Left cardiac atrium (tissue), 4 donors: ENCODE measurements at regions of chr19 and their contacts with region 1.

Region 1: DNA sequence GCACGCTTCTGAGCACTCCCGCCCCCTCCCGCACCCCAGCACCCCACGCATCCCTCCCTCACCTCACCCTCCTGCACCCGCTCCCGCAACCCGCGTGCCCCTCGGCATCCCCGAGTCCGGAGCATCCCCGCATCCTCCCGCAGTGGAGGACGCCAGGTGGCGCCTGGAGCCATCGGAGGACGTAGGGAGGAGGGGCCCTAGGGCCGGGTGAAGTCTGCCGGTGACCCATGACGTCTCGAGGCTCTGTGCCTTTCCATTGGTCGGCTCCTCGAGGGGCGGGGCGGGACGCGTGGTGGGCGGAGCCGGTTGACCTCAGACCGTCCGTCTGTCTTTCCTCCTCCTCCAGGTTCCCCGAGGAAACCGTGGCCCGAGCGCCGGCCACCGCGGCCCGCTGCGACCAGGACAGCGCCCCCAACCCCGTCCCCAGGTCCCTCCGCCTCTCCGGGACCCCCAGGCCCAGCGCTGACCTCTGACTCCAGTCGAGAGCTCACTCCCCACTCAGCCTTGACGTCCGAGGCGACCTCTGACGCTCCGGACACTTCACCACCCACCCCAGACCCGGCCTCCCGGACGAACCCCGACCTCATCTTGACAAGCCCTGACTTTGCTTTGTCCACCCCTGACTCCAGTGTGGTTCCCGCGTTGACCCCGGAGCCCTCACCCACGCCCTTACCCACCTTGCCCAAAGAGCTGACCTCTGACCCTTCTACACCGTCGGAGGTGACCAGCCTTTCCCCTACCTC is 19.9 kb downstream of the SBK2 start:
- DNase-seq: peak; percentile 94
- ATAC-seq: peak; percentile 98

Region 2: GRCh38 chr19:55599468-55600279 is 82.6 kb after region 1 on chr19 and contains the start of gene FIZ1:
- intact Hi-C with region 1: loop called in 1 of 2 experiments (anchors 10 kb)
- DNase-seq: peak; percentile 98
- ATAC-seq: peak; percentile 89 to 92
- total RNA-seq, gene FIZ1: 14.5 to 17.0 TPM

Region 3: GRCh38 chr19:55605207-55605636 is 88.2 kb after region 1 on chr19:
- intact Hi-C with region 1: loop called (anchors 5 to 10 kb)
- DNase-seq: peak; percentile 99
- ATAC-seq: peak; percentile 86 to 87

Region 4: DNA sequence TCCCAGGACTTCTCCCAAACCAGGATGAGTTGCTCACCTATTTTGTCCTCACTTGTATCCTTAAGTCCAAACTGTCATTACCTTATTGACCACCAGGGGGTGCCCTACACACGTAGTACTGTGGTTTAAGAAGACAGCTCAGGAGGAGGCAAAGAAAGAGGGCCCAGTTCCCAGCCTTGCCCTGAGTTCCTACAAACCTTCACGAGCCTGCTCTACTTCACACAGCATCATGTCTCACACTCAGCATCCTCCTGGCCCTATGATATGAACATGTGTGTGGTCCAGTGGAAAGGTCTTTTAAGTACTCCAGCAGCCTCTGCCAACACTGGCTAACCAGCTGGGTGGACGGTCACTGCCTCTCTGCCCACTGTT is 115.4 kb after region 1 on chr19:
- intact Hi-C with region 1: loop called (anchors 2 to 10 kb)
- DNase-seq: peak; percentile 83
- ATAC-seq: peak; percentile 62 to 66